WTC11 (cell line): ENCODE measurements at regions of chr14 and their contacts with region 1.

Region 1: DNA sequence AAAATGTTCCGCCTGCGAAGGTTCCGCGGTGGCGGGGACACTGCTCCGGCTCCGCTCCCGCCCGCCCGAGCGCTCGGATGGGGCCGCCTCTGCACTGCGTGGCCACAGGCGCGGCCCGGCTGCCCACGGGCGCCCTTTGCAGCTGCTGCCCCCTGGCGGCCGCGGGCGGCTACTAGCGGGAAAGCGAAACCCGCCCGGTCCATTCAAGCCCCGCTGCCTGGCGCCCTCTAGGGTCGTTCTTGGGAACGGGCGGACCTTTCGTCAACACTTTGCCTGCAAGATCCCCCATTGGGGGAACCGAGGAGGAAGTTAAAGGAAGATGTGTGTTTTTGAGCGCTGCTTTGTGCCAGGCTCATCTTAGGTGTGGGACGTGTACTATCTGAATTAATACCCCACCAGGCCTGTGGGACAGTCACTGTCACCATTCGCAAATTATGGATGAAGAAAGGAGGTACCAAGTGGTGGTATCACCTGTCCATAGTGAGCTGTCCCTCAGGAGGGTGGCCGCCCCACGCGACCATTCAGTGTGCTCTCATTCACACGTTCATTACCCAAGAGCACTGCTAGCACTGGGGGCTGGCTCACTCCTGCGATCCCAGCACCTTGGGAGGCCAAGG is 19.4 kb downstream of the GPR132 start:
- DNase-seq: peak; percentile 96
- ATAC-seq: peak; percentile 92
- H3K4me3 Mint-ChIP-seq: no peak overlapping the region
- H3K27ac Mint-ChIP-seq: no peak overlapping the region
- H3K4me1 Mint-ChIP-seq: no peaks in the 10 kb centered on the region
- H3K27me3 Mint-ChIP-seq: peaks cover 20% of the 10 kb centered on the region
- CTCF ChIP-seq: peak; percentile 100

Region 2: GRCh38 chr14:104889375-104889757 is 156.5 kb before region 1 on chr14:
- CTCF ChIA-PET with region 1: no interaction called
- POLR2A ChIA-PET with region 1: no interaction called
- DNase-seq: no peak
- ATAC-seq: no peak
- H3K4me3 Mint-ChIP-seq: no peak overlapping the region
- H3K27ac Mint-ChIP-seq: no peak overlapping the region
- H3K4me1 Mint-ChIP-seq: peaks cover 2% of the 10 kb centered on the region; the same call in 1 of the 2 replicates
- H3K27me3 Mint-ChIP-seq: no peaks in the 10 kb centered on the region
- CTCF ChIP-seq: no peak

Region 3: DNA sequence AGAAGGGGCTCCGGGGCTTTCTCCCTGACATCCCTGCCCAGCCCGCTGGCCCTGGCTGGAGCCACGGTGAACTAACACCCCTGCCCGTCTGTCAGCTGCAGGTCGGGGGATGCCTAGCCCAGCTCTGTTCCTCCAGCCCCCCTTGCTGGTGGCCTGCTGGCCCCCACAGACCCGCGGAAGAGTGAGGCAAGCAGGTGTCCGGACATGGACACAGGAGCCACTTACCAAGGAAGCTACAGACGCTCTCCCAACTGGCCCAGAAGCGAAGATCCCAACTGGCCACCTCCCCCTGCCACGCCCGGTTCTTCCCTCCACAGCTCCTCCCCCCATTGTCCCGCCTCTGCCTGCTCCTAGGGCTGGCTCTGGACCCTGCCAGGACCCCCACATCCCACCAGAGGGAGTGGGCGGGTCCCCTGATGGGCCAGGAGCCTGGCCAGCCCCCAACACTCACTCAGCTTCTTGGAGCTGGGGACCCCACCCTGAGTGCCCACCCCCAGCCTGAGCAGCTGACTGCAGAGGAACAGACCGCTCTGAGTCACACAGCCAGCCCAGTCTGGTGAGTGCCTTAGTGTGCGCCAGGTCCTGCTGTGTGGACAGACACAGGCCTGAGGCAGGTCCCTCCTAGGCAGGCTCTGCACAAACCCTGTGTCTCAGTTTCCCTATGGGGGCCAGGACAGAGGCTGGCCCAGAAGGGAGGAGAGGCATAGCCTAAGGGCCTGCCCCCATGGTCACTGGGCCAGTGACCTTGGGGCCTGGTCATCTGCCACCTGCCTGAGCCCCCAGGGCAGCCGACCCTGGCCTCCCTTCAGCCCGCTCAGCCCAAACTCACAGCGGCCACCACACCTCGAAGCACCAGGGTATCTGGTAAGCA is 75.4 kb before region 1 on chr14:
- CTCF ChIA-PET with region 1: interaction called, 56 read pairs
- POLR2A ChIA-PET with region 1: no interaction called
- DNase-seq: no peak
- ATAC-seq: peak; percentile 16
- H3K4me3 Mint-ChIP-seq: no peak overlapping the region
- H3K27ac Mint-ChIP-seq: no peak overlapping the region
- H3K4me1 Mint-ChIP-seq: peaks cover 6% of the 10 kb centered on the region
- H3K27me3 Mint-ChIP-seq: peaks cover 2% of the 10 kb centered on the region; the same call in 1 of the 2 replicates
- CTCF ChIP-seq: no peak

Region 4: GRCh38 chr14:104976198-104977007 is 69.4 kb before region 1 on chr14:
- CTCF ChIA-PET with region 1: interaction called, 56 read pairs
- POLR2A ChIA-PET with region 1: no interaction called
- DNase-seq: peak; percentile 81
- ATAC-seq: peak; percentile 4; the same call in 1 of the 2 replicates
- H3K4me3 Mint-ChIP-seq: peak overlapping the region; percentile 27
- H3K27ac Mint-ChIP-seq: no peak overlapping the region
- H3K4me1 Mint-ChIP-seq: peaks cover 11% of the 10 kb centered on the region; the same call in 1 of the 2 replicates
- H3K27me3 Mint-ChIP-seq: peaks cover 44% of the 10 kb centered on the region
- CTCF ChIP-seq: peak; percentile 94

Region 5: DNA sequence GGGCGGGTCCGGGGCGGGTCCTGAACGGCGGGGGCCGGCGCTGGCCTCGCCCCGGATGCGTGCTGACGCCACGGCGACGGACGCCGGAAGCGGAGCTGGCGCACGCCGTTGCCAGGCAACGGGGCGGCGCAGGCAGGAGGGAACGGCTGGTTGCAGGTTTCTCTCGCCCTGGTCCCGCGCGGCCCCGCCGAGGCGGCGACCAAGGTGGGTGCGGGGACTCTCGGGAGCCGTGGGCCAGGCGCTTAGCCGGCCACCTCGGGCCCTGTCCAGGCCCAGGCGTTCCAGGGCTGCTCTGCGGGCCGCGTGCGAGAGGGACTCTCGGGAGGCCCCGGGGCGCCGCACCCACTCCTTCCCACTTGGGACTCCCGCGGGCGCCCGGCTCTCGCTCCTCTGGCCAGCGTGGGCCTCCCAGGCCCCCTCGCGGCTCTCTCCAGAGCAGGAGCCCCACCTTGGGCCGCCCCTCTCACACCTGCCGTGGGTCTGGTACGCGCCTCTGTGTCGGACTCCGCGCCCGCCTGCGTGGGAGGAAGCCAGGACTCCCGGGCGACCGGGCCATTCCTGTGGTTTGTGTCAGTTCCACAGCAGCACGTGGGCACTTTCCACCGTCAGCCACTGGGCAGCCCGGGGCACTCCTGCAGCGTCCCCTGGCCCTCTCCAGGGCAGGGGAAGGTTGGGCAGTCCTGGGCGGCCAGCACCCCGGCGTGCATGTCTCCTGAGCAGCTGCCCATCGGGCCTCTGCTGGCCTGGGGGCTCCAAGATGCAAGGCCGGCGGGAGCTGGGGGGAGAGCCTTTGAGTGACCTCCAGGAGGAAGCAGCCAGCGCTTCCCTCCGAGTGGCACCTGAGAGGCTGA is 59.9 kb before region 1 on chr14 and contains the start of gene CLBA1:
- CTCF ChIA-PET with region 1: interaction called, 24 read pairs
- POLR2A ChIA-PET with region 1: no interaction called
- DNase-seq: peak; percentile 81
- ATAC-seq: peak; percentile 85
- H3K4me3 Mint-ChIP-seq: peak within 1 kb of the TSS; percentile 62
- H3K27ac Mint-ChIP-seq: no peak within 1 kb of the TSS
- H3K4me1 Mint-ChIP-seq: 0 out of 2 replicates have a peak, but pooled peaks cover 4% of the 10 kb centered on the region
- H3K27me3 Mint-ChIP-seq: peaks cover 4% of the 10 kb centered on the region
- CTCF ChIP-seq: no peak
- total RNA-seq, gene CLBA1: 2.6 to 3.8 TPM (median 2.8 TPM) in 3 replicates

Region 6: DNA sequence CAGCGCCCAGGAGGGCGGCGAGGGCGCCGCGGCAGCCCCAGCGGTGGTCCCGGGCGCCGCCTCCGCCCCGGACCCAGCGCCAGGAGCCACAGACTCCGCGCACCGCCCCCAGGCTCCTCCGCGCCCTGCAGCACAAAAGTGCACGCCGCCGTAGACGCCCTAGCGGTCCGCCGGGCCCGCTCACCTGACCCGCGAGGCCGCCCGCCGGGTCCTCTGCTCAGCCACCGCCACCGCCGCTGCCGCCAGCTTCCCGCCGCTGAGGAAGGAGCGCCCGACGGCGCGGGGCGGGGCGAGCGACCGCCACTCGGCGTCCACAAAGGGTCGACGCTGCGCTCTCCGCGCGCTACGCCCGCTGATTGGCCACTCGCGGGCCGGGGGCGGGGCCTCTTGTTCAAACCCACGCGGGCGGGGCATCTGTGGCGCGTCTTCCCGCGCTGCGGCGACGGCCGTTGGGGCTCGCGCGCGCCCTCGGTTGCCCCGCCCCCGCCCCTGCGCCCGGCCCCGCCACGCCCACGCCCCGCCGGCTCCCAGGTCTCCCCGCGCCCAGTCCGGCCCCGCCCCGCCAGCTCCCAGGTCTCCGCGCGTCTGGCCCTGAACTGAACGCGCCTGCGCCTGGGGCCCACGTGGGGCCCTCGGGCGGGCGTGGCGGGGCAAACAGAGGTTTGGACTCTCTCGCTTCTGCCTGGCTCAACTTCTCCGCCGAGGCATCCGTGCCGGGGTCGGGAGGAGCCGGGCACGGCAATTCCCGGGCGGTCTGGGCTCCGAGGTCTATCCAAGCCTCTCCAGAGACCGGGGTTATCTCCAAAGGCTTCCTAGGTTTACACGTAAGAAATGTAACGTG is 24.8 kb before region 1 on chr14 and contains the start of gene CDCA4:
- CTCF ChIA-PET with region 1: interaction called, 21 read pairs
- POLR2A ChIA-PET with region 1: interaction called, 3 read pairs
- DNase-seq: peak; percentile 96
- ATAC-seq: peak; percentile 89
- H3K4me3 Mint-ChIP-seq: peak within 1 kb of the TSS; percentile 88
- H3K27ac Mint-ChIP-seq: peak within 1 kb of the TSS; percentile 73
- H3K4me1 Mint-ChIP-seq: peaks cover 63% of the 10 kb centered on the region
- H3K27me3 Mint-ChIP-seq: no peaks in the 10 kb centered on the region; the same call in 1 of the 2 replicates
- CTCF ChIP-seq: no peak
- total RNA-seq, gene CDCA4: 55.9 to 63.3 TPM (median 58.3 TPM) in 3 replicates

Region 7: DNA sequence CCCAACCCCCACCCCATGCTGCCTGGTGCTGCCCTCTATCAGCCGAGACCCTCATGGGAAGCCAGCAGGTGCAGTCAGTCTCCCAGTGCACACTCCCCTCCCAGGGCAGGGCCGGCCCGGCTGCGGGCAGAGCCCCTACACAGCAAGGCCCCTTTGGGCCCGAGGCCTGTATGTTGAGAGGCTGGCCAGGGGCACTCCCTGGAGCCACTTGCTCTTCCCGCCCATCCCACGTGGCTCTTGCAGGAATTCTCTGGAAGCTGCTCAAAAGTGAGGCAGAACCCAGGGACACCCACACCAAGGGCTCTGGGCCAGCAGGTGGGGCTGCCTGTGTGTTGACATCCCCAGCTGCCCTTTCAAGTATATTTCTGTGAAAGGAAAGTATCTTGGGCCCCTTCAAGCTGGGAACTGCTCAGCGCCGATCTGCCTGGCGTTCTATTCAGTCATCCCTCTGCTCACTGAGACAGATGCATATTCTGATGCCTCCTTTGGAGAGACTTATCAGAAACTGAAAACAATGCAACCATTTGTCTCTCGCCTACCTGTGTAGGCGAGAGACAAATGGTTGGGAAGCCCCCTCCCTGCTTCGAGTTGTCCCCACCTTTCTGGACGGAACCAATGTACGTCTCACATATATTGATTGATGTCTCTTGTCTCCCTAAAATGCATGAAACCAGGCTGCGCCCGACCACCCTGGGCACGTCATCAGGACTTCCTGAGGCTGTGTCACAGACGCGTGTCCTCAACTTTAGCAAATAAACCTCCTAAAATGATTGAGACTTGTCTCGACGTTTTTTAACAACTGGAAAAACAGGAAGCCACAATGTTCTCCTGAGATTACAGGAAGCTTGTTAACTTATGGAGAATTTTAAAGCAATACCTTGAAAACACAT is 13.5 kb after region 1 on chr14:
- CTCF ChIA-PET with region 1: interaction called, 35 read pairs
- POLR2A ChIA-PET with region 1: no interaction called
- DNase-seq: peak; percentile 46
- ATAC-seq: peak; percentile 76
- H3K4me3 Mint-ChIP-seq: no peak overlapping the region
- H3K27ac Mint-ChIP-seq: no peak overlapping the region
- H3K4me1 Mint-ChIP-seq: peaks cover 15% of the 10 kb centered on the region; the same call in 1 of the 2 replicates
- H3K27me3 Mint-ChIP-seq: peaks cover 28% of the 10 kb centered on the region
- CTCF ChIP-seq: no peak

Region 8: GRCh38 chr14:105075379-105076295 is 29.8 kb after region 1 on chr14:
- CTCF ChIA-PET with region 1: interaction called, 18 read pairs
- POLR2A ChIA-PET with region 1: no interaction called
- DNase-seq: no peak
- ATAC-seq: peak; percentile 68
- H3K4me3 Mint-ChIP-seq: no peak overlapping the region
- H3K27ac Mint-ChIP-seq: no peak overlapping the region
- H3K4me1 Mint-ChIP-seq: 0 out of 2 replicates have a peak, but pooled peaks cover 3% of the 10 kb centered on the region
- H3K27me3 Mint-ChIP-seq: peaks cover 5% of the 10 kb centered on the region
- CTCF ChIP-seq: no peak

Region 9: DNA sequence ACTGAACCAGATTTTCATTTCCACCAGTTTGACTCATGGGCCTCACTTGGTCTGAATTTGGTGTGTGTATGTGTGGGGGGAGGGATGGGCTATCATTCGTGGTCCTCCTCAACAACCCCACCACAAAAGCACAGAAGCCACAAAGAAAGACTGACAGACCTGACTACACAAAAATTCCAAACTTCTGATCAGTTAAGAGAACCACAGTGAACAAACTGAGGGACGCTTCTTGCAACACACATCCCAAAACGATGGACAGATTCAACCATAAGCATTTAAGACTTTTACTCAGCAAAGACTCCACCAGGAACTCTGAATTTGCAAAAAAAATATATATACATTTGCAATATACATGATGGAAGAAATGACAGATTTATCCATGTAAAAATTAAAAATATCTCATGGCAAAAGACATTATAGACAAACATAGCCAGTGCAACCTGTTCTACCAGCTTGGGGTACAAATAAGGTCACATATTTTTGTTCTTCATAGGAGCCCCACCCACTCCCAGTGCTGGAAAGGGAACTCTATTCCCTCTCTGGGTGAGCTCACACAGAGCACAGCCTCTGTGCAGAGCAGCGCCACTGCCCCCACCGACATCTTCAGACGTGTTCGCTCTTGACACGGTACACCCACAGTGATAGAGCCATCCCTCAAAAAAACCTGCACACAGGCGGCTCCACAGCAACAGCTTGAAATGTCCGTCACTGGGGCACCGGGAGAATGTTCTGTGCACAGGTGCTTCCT is 73.0 kb after region 1 on chr14:
- CTCF ChIA-PET with region 1: no interaction called
- POLR2A ChIA-PET with region 1: no interaction called
- DNase-seq: no peak
- ATAC-seq: no peak
- H3K4me3 Mint-ChIP-seq: no peak overlapping the region
- H3K27ac Mint-ChIP-seq: no peak overlapping the region
- H3K4me1 Mint-ChIP-seq: no peaks in the 10 kb centered on the region
- H3K27me3 Mint-ChIP-seq: peaks cover 12% of the 10 kb centered on the region
- CTCF ChIP-seq: no peak